Ovary (tissue), 10 donors: ENCODE measurements at regions of chr3 and their contacts with region 1.

Region 1: GRCh38 chr3:40452876-40453730 is 4.0 kb upstream of the RPL14 start:
- DNase-seq: peak; percentile 95 to 97 (median 96)
- H3K4me3 ChIP-seq: peak overlapping the region; percentile 61
- H3K27ac ChIP-seq: peak overlapping the region; percentile 82 to 88
- H3K4me1 ChIP-seq: peaks cover 9% of the 10 kb centered on the region
- H3K27me3 ChIP-seq: no peaks in the 10 kb centered on the region
- CTCF ChIP-seq: no peak
- EP300 ChIP-seq: peak; percentile 10
- POLR2A ChIP-seq: peak; percentile 36

Region 2: GRCh38 chr3:39657075-39657474 is 796.0 kb before region 1 on chr3:
- intact Hi-C with region 1: no loop called
- DNase-seq: no peak
- H3K4me3 ChIP-seq: no peak overlapping the region
- H3K27ac ChIP-seq: no peak overlapping the region
- H3K4me1 ChIP-seq: no peaks in the 10 kb centered on the region
- H3K27me3 ChIP-seq: no peaks in the 10 kb centered on the region
- CTCF ChIP-seq: no peak
- EP300 ChIP-seq: no peak
- POLR2A ChIP-seq: no peak

Region 3: DNA sequence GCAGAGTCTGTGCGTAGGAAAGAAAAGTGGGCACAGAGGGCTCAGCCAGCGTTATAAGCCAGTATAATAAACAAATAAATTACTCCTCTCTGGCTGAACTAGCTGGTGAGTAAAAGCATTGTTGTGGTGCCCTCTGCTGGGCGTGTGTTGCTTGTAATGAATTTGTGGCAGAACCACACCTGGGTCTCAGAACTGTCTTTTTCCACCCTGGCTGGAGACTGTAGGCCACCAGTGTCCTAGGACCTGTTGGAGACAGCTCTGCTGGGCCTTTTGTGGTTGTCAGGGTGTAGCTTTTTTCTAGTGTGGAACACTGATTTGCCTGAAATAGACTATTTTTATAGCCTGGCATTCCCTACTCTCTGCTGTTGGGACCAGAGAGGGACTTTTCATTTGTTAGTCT is 274.1 kb before region 1 on chr3:
- intact Hi-C with region 1: no loop called
- DNase-seq: peak; percentile 59 to 83 (median 80)
- H3K4me3 ChIP-seq: no peak overlapping the region
- H3K27ac ChIP-seq: no peak overlapping the region
- H3K4me1 ChIP-seq: no peaks in the 10 kb centered on the region
- H3K27me3 ChIP-seq: no peaks in the 10 kb centered on the region
- CTCF ChIP-seq: peak; percentile 49 to 71 (median 64)
- EP300 ChIP-seq: no peak
- POLR2A ChIP-seq: no peak

Region 4: GRCh38 chr3:40309418-40309924 is 143.6 kb before region 1 on chr3 and contains the start of gene EIF1B:
- intact Hi-C with region 1: loop called in 2 of 4 experiments (anchors 5 to 10 kb)
- DNase-seq: peak; percentile 98 to 99 (median 99)
- H3K4me3 ChIP-seq: peak within 1 kb of the TSS; percentile 58
- H3K27ac ChIP-seq: peak within 1 kb of the TSS; percentile 93 to 94
- H3K4me1 ChIP-seq: peaks cover 4% of the 10 kb centered on the region
- H3K27me3 ChIP-seq: no peaks in the 10 kb centered on the region
- CTCF ChIP-seq: peak; percentile 87 to 93 (median 91)
- EP300 ChIP-seq: peak; percentile 57
- POLR2A ChIP-seq: peak; percentile 97
- total RNA-seq, gene EIF1B: 30.4 to 108 (median 73.0) TPM